OCI-LY7 (cell line): ENCODE measurements at regions of chr4 and their contacts with region 1.

Region 1: DNA sequence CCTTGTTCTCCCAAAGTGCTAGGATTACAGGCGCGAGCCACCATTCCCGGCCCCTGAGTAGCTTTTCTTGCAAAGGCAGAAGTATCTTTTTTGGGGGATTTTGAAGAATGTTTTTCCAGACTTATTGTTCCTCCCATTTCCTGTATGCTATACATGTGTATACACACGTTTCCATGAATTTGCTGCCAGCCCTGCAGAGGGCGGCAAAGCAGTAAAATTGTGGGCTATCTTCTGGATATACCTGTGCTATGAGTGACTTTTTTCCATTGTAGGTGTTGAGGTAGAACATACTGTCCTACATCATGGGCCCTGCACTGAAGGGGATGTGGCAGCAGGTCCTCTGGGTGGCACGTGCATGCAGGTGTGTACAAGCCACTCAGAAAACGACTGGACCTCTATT is 16.9 kb upstream of the MED28 start:
- DNase-seq: no peak
- H3K4me3 ChIP-seq: no peak overlapping the region
- H3K27ac ChIP-seq: no peak overlapping the region
- H3K4me1 ChIP-seq: peaks cover 36% of the 10 kb centered on the region
- CTCF ChIP-seq: peak; percentile 63

Region 2: GRCh38 chr4:17583941-17584340 is 13.6 kb before region 1 on chr4:
- CTCF ChIA-PET with region 1: no interaction called
- POLR2A ChIA-PET with region 1: interaction called, 16 read pairs
- intact Hi-C with region 1: no loop called
- DNase-seq: no peak
- H3K4me3 ChIP-seq: no peak overlapping the region
- H3K27ac ChIP-seq: no peak overlapping the region
- H3K4me1 ChIP-seq: peaks cover 19% of the 10 kb centered on the region
- CTCF ChIP-seq: no peak

Region 3: GRCh38 chr4:17614416-17615299 is 17.1 kb after region 1 on chr4 and contains the start of gene MED28:
- CTCF ChIA-PET with region 1: no interaction called
- POLR2A ChIA-PET with region 1: interaction called, 19 read pairs
- intact Hi-C with region 1: loop called (anchors 1 kb)
- DNase-seq: peak; percentile 98
- H3K4me3 ChIP-seq: peak within 1 kb of the TSS; percentile 88
- H3K27ac ChIP-seq: peak within 1 kb of the TSS; percentile 52
- H3K4me1 ChIP-seq: peaks cover 32% of the 10 kb centered on the region
- CTCF ChIP-seq: no peak
- total RNA-seq, gene MED28: 20.7 and 27.0 TPM in 2 replicates